Ovary (tissue), 10 donors: ENCODE measurements at regions of chr19 and their contacts with region 1.

Region 1: GRCh38 chr19:1935484-1936208 is 5.3 kb upstream of the CSNK1G2 start:
- DNase-seq: no peak
- H3K4me3 ChIP-seq: no peak overlapping the region
- H3K27ac ChIP-seq: no peak overlapping the region
- H3K4me1 ChIP-seq: peaks cover 6% of the 10 kb centered on the region
- H3K27me3 ChIP-seq: no peaks in the 10 kb centered on the region
- CTCF ChIP-seq: no peak
- EP300 ChIP-seq: no peak
- POLR2A ChIP-seq: no peak

Region 2: GRCh38 chr19:1837625-1838105 is 98.0 kb before region 1 on chr19:
- intact Hi-C with region 1: no loop called
- DNase-seq: peak in 1 of 5 donors; percentile 59
- H3K4me3 ChIP-seq: no peak overlapping the region
- H3K27ac ChIP-seq: no peak overlapping the region
- H3K4me1 ChIP-seq: peaks cover 27% of the 10 kb centered on the region
- H3K27me3 ChIP-seq: no peaks in the 10 kb centered on the region
- CTCF ChIP-seq: peak; percentile 16 to 45 (median 35)
- EP300 ChIP-seq: no peak
- POLR2A ChIP-seq: no peak

Region 3: GRCh38 chr19:2061495-2062381 is 126.1 kb after region 1 on chr19:
- intact Hi-C with region 1: loop called in 1 of 4 experiments (anchors 10 kb)
- DNase-seq: peak; percentile 99 to 100 (median 100)
- H3K4me3 ChIP-seq: peak overlapping the region; percentile 83
- H3K27ac ChIP-seq: peak overlapping the region; percentile 96 to 100
- H3K4me1 ChIP-seq: peaks cover 15% of the 10 kb centered on the region
- H3K27me3 ChIP-seq: no peaks in the 10 kb centered on the region
- CTCF ChIP-seq: peak in 1 of 3 donors; percentile 15
- EP300 ChIP-seq: peak; percentile 49
- POLR2A ChIP-seq: no peak